Activated CD8-positive, alpha-beta T cell treated with anti-CD3 and anti-CD28 coated beads, Interleukin-2, amount 10 ng/mL, durations not matched to agents 7 days and 5 days (primary cell): ENCODE measurements at regions of chr20 and their contacts with region 1.

Region 1: DNA sequence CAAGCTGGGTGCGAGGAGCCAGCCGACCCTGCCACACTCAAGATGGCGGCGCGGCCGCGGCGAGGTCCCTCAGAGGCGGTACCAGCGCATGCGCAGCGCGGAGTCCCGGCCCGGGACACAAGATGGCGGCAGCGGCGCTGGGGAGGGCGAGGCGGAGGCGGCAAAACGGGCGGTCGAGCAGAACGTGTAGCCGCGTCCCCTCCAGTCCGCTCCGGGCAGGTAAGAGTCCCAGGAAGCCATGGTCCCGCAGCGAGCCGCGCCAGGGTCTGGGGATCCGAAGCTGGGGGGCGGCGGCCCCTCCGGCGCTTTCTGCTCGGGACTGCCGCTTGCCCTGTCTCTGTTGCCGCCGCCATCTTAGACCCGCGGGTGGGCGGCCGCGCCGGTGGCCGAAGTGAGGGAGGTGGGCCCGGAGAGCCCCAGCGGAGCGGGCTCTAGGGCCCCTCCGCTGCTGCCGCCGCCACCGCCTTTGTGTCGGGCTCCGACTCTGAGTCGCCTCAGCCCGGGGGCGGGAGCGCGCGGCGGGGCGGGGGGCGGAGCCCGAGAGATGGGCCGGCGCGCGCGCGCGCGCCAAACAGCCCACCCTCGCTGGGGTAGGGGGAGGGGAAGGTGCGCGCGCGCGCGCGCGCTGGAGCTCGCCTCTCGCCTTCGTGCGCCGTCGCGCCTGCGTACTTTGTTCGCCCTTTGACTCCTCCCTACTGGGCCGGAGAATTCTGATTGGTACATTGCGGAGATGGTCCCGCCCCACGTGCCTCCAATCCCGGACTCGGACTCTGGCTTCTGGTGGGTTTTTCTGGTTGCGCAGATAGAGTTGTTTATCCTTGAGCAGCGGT is at the start of gene PCIF1:
- DNase-seq: peak; percentile 99
- ATAC-seq: peak; percentile 83
- H3K4me3 Mint-ChIP-seq: peak within 1 kb of the TSS; percentile 90
- H3K27ac Mint-ChIP-seq: peak within 1 kb of the TSS; percentile 98
- H3K4me1 Mint-ChIP-seq: peaks cover 29% of the 10 kb centered on the region
- H3K27me3 Mint-ChIP-seq: no peaks in the 10 kb centered on the region
- total RNA-seq, gene PCIF1: 40.3 to 41.2 TPM

Region 2: GRCh38 chr20:45779011-45779915 is 155.5 kb before region 1 on chr20:
- CTCF ChIA-PET with region 1: no interaction called
- POLR2A ChIA-PET with region 1: no interaction called
- DNase-seq: no peak
- ATAC-seq: no peak
- H3K4me3 Mint-ChIP-seq: no peak overlapping the region
- H3K27ac Mint-ChIP-seq: no peak overlapping the region
- H3K4me1 Mint-ChIP-seq: peaks cover 31% of the 10 kb centered on the region
- H3K27me3 Mint-ChIP-seq: peaks cover 11% of the 10 kb centered on the region

Region 3: DNA sequence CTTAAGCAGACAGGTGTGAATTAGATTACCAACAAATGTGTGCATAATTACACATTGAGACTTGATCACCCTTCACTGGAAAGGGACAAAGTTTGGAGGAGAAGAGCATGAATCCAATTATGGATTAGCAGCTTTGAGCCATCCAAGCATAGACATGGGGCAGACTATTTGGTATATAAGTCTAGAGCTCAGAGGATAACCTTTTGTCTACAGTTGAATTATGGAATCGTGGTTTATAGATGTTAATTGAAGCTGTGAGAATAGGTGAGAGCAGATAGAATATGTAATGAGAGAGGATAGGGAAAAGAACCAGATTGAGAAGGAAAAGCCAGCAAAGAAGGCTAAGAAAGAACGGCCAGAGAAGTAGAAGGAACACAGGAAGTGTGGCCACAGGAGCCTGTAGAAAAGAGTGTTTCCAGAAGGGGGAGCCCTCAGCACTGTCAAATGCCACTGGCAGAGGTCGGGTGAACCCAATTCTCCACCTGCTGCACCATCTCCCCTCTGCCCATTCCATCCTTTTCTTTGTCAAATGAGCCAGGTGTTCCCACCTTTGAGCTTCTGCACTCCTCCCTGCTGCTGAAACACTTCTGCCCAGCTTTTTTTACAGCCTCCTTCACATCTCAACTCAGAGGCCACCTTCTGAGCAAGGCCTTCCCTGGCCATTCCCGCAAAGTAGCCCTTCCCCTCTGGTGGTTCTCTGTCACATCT is 135.7 kb before region 1 on chr20:
- CTCF ChIA-PET with region 1: interaction called, 16 read pairs
- POLR2A ChIA-PET with region 1: interaction called, 6 read pairs
- DNase-seq: peak; percentile 82
- ATAC-seq: peak; percentile 94
- H3K4me3 Mint-ChIP-seq: no peak overlapping the region
- H3K27ac Mint-ChIP-seq: peak overlapping the region; percentile 77
- H3K4me1 Mint-ChIP-seq: peaks cover 12% of the 10 kb centered on the region
- H3K27me3 Mint-ChIP-seq: no peaks in the 10 kb centered on the region

Region 4: DNA sequence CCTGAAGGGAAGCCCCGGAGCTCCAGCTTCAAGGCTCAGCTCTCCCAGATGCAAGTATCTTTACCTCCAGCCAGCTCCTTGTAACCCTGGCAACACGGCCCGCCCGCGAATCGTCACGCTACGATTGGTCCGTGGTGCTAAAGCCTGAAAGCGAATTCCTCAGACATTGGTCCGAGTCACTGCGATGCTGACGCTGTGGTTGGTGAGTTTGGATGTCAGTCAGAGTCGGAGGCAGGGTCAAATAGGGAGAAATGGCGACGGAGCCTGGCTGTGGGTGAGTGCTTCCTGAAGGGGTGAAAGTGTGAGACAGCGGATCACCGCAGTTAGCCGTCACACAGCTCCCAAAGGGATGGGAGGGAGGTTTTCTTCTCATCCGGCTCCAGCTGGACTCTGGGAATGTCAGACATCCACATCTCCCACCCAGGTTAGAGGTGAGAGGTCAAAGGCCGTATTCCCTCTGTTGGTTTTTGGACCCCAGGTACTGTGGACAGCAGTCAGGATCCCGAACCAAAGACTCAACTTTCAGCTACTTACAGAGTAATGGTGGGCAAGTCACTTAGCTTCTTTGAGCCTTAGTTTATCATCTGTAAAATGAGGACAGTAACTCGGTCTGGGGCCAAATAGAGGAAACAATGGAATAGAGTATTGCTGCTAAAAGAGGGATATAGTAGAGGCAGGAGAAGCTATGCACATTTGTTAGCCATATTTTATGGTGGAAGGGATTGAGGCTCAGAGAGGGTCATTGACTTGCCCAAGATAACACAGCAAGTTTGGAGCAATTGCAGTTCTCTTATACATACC is 53.6 kb before region 1 on chr20 and contains the start of gene ZSWIM1:
- CTCF ChIA-PET with region 1: interaction called, 8 read pairs
- POLR2A ChIA-PET with region 1: interaction called, 24 read pairs
- DNase-seq: peak; percentile 99
- ATAC-seq: peak; percentile 99
- H3K4me3 Mint-ChIP-seq: peak within 1 kb of the TSS; percentile 86
- H3K27ac Mint-ChIP-seq: peak within 1 kb of the TSS; percentile 84
- H3K4me1 Mint-ChIP-seq: peaks cover 39% of the 10 kb centered on the region
- H3K27me3 Mint-ChIP-seq: no peaks in the 10 kb centered on the region
- total RNA-seq, gene ZSWIM1: 7.0 TPM

Region 5: GRCh38 chr20:45910670-45911485 is 23.9 kb before region 1 on chr20:
- CTCF ChIA-PET with region 1: interaction called, 5 read pairs
- POLR2A ChIA-PET with region 1: interaction called, 19 read pairs
- DNase-seq: peak; percentile 98
- ATAC-seq: peak; percentile 95
- H3K4me3 Mint-ChIP-seq: peak overlapping the region; percentile 77
- H3K27ac Mint-ChIP-seq: peak overlapping the region; percentile 88
- H3K4me1 Mint-ChIP-seq: peaks cover 25% of the 10 kb centered on the region
- H3K27me3 Mint-ChIP-seq: peaks cover 16% of the 10 kb centered on the region

Region 6: DNA sequence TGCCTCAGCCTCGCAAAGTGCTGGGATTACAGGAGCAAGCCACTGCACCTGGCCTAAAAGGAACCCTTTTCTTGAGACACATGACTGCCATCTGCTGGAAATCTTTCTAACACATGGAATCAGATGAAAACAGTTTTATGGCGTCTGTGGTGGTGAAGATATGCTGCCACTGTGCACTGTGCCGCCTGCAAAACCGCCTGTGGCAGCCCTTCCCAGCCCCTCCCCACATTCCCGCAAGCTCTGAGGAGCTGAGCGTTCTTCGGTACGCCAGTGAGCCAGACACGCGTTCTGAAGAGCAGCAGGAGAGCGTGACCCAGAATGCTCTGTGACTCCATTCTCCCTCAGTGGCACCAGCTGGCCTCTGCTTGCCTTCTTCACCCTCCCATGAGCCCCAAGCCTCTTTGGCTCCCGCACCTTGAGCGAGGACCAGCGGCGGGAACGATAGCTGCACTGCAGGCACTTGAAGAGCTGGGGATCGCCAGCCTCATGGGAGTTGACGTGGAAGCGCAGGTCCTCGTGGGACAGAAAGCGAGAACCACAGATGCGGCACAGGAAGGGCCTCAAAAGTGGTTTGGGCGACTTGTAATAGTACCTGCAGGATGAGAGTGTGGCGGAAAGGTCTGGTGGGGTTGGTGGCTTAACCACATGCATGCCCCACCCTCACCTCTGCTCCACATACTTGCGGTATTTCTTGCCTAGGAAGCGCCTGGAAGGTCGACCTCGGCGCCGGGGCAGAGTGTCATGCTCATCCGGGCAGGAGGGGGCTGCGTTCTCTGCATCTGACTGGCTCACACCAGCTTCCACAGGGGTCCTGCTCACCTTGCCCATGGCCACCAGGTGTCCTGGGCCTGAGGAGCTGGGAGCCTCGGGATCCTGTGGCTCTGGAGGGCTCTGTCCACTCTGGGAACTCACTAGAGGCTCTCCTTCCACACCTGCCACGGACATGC is 28.5 kb after region 1 on chr20:
- CTCF ChIA-PET with region 1: interaction called, 90 read pairs
- POLR2A ChIA-PET with region 1: interaction called, 6 read pairs
- DNase-seq: no peak
- ATAC-seq: no peak
- H3K4me3 Mint-ChIP-seq: no peak overlapping the region
- H3K27ac Mint-ChIP-seq: no peak overlapping the region
- H3K4me1 Mint-ChIP-seq: peaks cover 5% of the 10 kb centered on the region
- H3K27me3 Mint-ChIP-seq: no peaks in the 10 kb centered on the region